Posterior cingulate gyrus (tissue), 11 donors: ENCODE measurements at regions of chr1 and their contacts with region 1.

Region 1: DNA sequence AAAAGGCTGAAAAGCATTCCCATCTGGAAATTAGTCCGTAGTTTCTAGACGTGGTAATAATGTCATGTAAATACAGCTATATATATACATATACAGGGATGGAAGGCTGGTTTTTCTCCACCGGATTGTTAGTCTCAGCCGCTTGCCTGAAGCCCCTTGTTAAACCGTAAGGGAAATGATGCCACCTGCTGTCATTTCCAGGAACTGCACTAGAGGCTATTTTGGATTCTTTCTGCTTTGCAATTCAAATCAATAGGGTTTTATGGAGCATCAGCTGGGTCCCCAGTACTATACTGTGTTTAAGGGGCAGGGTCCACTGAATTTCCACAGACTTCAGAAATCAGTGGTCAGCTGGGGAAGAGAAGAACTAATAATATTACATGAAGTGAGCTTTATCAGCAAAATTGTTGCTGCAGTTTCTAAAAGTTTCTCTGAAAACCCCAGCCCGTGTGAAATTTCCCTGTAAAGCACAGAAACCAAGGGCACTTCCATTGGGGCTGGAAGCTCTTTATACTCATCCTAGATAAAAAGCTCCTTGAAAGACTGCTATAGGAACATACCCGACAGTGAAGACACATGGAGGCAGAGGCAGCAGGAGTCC is 33.8 kb upstream of the MPZL1 start:
- DNase-seq: peak in 5 of 10 donors; percentile 33 to 79 (median 74)

Region 2: GRCh38 chr1:167553136-167554027 is 134.6 kb before region 1 on chr1 and contains the start of gene CREG1:
- intact Hi-C with region 1: loop called (anchors 10 kb)
- DNase-seq: peak; percentile 85 to 99 (median 92)

Region 3: GRCh38 chr1:167578939-167579521 is 109.0 kb before region 1 on chr1:
- intact Hi-C with region 1: no loop called
- DNase-seq: no peak

Region 4: DNA sequence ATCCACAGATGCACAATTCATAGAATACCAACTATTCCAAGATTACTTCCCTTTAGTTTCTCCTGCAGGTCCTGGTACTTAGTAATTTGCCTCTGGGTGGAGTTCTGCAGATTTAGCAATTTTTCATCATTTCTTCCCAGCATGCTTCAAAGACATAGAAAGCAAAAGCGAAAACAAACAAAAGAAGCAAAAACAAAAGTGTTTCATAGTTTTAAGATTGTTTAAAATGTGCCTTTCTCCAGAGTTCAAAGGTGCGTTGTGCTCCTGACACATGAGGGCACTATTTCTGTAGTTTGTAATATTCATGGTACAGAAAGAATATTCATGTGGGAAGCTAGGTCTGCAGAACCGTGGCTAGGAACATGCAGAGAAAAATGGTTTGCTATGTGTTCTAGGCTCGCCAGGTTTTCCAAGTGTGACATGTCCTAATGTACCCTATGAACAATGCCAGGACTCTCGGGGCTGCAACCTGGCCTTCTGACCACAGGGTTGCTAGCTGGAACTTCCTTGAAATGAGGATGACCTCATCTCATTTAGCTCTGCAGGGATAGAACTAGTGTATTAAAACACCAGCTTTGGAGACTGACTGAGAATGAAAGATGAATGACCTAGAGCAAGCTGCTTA is 88.0 kb before region 1 on chr1:
- intact Hi-C with region 1: loop called (anchors 2 kb)
- DNase-seq: no peak